ENCODE measurements at regions of chr18 and their contacts with region 1.

Region 1: GRCh38 chr18:46481048-46481846 is 175.8 kb downstream of the LOXHD1 start:
- DNase-seq: peak; percentile 27
- H3K4me3 Mint-ChIP-seq: no peak overlapping the region
- H3K27ac Mint-ChIP-seq: no peak overlapping the region
- H3K4me1 Mint-ChIP-seq: no peaks in the 10 kb centered on the region
- H3K27me3 Mint-ChIP-seq: peaks cover 13% of the 10 kb centered on the region

Region 2: DNA sequence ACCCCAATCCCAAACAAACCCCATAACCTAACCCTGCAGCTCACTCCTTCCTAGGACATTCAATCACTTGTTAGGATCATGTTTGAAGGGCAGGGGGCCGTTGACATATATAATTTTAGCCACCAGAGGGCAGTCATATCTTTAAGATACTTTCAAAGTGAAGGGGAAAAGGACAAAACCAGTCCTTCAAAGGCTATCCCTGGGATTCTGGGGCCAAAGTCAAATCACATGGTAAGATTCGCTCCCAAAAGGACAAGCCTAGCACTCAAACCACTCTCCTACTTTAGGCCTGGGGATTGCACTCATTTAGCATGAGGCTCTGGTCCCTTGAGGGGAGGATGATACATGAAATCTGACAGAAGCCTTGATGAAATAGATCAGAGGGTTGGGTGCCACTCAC is 332.4 kb before region 1 on chr18:
- intact Hi-C with region 1: loop called (anchors 1 kb)
- DNase-seq: peak; percentile 38
- H3K4me3 Mint-ChIP-seq: no peak overlapping the region
- H3K27ac Mint-ChIP-seq: peak overlapping the region; percentile 7
- H3K4me1 Mint-ChIP-seq: peaks cover 30% of the 10 kb centered on the region
- H3K27me3 Mint-ChIP-seq: peaks cover 2% of the 10 kb centered on the region

Region 3: GRCh38 chr18:46281185-46282176 is 199.8 kb before region 1 on chr18:
- intact Hi-C with region 1: loop called (anchors 1 kb)
- DNase-seq: peak; percentile 41
- H3K4me3 Mint-ChIP-seq: no peak overlapping the region
- H3K27ac Mint-ChIP-seq: no peak overlapping the region
- H3K4me1 Mint-ChIP-seq: peaks cover 18% of the 10 kb centered on the region
- H3K27me3 Mint-ChIP-seq: no peaks in the 10 kb centered on the region

Region 4: GRCh38 chr18:46772357-46772756 is 291.1 kb after region 1 on chr18:
- intact Hi-C with region 1: no loop called
- DNase-seq: no peak
- H3K4me3 Mint-ChIP-seq: no peak overlapping the region
- H3K27ac Mint-ChIP-seq: no peak overlapping the region
- H3K4me1 Mint-ChIP-seq: no peaks in the 10 kb centered on the region
- H3K27me3 Mint-ChIP-seq: peaks cover 2% of the 10 kb centered on the region

Region 5: GRCh38 chr18:46832849-46833248 is 351.6 kb after region 1 on chr18:
- intact Hi-C with region 1: no loop called
- DNase-seq: no peak
- H3K4me3 Mint-ChIP-seq: no peak overlapping the region
- H3K27ac Mint-ChIP-seq: no peak overlapping the region
- H3K4me1 Mint-ChIP-seq: no peaks in the 10 kb centered on the region
- H3K27me3 Mint-ChIP-seq: no peaks in the 10 kb centered on the region

Measured in activated T-helper 1 cell treated with anti-CD3 and anti-CD28 coated beads, Interleukin-12 subunit alpha, Interleukin-12 subunit beta, Interleukin-2, Interleukin-4 antibody, amounts not matched to agents 30 ng/mL and 10 ng/mL and 1 ng/mL, durations not matched to agents 14 hours and 24 hours and 36 hours (primary cell).